Heart left ventricle (tissue), 16 donors: ENCODE measurements at regions of chr3 and their contacts with region 1.

Region 1: DNA sequence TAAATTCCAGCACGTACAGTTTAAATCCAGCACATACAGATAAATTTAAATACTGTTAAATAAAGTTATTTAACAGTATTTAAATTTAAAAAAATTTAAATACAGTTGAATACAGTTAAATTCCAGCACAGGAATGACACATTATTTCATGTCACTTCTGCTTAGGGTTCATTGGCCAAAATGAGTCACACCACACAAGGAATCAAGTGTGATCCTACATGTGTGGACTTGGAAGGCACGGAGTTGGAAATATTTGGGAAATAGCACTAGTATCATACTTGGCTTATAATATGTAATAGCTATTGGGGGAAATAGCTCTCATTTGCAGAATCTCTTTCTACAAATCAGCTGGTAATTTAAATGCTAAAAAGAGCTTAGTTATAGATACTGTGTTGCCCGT is 10.6 kb downstream of the RAB7A start:
- DNase-seq: no peak
- ATAC-seq: peak in 1 of 4 donors; percentile 27
- H3K4me3 ChIP-seq: no peak overlapping the region
- H3K27ac ChIP-seq: no peak overlapping the region
- H3K4me1 ChIP-seq: peaks cover 5 to 75% (median 50%) of the 10 kb centered on the region in 12 donors
- H3K27me3 ChIP-seq: no peaks in the 10 kb centered on the region
- CTCF ChIP-seq: no peak
- POLR2A ChIP-seq: no peak

Region 2: DNA sequence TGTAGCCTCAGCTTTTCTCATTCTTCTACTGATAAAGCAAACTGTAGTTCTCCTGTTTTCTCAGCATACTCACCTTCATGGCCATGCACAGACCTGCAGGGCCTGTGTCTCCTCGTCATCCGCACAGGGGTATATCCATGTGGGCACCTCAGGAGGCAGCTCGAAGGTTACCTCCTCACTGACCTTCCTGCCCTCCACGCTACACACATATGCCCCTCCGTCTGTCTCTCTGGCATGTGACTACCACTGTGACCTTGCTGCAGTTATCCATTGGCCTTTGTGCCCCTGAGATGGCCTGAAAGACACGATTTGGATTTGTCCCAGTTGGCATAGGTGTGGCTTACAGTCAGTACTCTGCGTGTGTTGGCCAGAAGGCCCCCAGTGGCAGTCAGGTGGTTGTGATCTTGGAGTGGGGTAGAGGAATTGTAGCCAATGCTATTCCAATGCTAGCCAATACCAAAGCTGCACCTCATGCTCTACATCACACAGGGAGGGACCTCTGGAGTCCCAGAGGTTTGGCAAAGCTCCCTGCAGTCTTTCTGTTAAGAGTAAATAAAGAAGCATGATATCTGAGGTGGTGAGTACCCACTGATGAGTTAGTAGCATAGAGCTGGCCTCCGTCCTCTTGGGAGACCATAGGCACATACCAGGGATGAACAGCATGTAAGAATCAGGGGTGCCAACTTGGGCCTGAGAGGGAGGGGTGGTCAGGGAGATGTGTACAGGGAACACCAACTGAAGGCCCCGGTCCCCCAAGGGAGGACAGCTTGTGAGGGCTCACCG is 439.9 kb before region 1 on chr3:
- intact Hi-C with region 1: no loop called
- DNase-seq: peak in 4 of 5 donors; percentile 64 to 84 (median 70)
- ATAC-seq: peak; percentile 87 to 94 (median 91)
- H3K4me3 ChIP-seq: no peak overlapping the region
- H3K27ac ChIP-seq: peak overlapping the region; percentile 24 to 84 (median 67)
- H3K4me1 ChIP-seq: peaks cover 0 to 56% (median 23%) of the 10 kb centered on the region in 12 donors
- H3K27me3 ChIP-seq: no peaks in the 10 kb centered on the region
- CTCF ChIP-seq: no peak
- POLR2A ChIP-seq: no peak

Region 3: DNA sequence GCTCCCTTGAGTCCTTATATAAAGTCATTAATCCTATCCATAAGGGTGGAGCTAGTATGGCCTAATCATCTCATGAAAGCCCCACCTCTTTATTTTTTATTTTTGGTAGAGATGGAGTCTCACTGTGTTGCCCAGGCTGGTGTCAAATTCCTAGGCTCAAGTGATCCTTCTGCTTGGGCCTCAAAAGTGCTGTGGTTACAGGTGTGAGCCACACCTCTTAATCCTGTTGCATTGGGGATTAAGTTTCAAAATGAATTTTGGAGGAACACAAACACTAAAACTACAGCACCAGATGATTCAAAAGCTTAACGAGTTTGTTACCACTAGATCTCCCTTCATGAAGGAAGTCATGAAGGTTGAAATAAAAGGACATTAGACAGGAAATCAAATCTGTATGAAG is 17.1 kb after region 1 on chr3:
- intact Hi-C with region 1: no loop called
- DNase-seq: no peak
- ATAC-seq: no peak
- H3K4me3 ChIP-seq: no peak overlapping the region
- H3K27ac ChIP-seq: no peak overlapping the region
- H3K4me1 ChIP-seq: peaks cover 0 to 66% (median 28%) of the 10 kb centered on the region in 12 donors
- H3K27me3 ChIP-seq: no peaks in the 10 kb centered on the region
- CTCF ChIP-seq: no peak
- POLR2A ChIP-seq: no peak

Region 4: GRCh38 chr3:128767094-128767750 is 30.6 kb after region 1 on chr3:
- intact Hi-C with region 1: loop called in 2 of 10 experiments (anchors 5 kb)
- DNase-seq: no peak
- ATAC-seq: no peak
- H3K4me3 ChIP-seq: no peak overlapping the region
- H3K27ac ChIP-seq: peak overlapping the region in 1 of 12 donors; percentile 35
- H3K4me1 ChIP-seq: peaks cover 0 to 83% (median 56%) of the 10 kb centered on the region in 12 donors
- H3K27me3 ChIP-seq: no peaks in the 10 kb centered on the region
- CTCF ChIP-seq: no peak
- POLR2A ChIP-seq: no peak

Region 5: GRCh38 chr3:128787256-128788240 is 50.9 kb after region 1 on chr3:
- intact Hi-C with region 1: loop called in 3 of 10 experiments (anchors 1 to 10 kb)
- DNase-seq: no peak
- ATAC-seq: no peak
- H3K4me3 ChIP-seq: no peak overlapping the region
- H3K27ac ChIP-seq: peak overlapping the region in 6 of 12 donors; percentile 1 to 80 (median 52)
- H3K4me1 ChIP-seq: peaks cover 4 to 97% (median 75%) of the 10 kb centered on the region in 12 donors
- H3K27me3 ChIP-seq: no peaks in the 10 kb centered on the region
- CTCF ChIP-seq: peak in 6 of 12 donors; percentile 7 to 27 (median 14)
- POLR2A ChIP-seq: no peak

Region 6: DNA sequence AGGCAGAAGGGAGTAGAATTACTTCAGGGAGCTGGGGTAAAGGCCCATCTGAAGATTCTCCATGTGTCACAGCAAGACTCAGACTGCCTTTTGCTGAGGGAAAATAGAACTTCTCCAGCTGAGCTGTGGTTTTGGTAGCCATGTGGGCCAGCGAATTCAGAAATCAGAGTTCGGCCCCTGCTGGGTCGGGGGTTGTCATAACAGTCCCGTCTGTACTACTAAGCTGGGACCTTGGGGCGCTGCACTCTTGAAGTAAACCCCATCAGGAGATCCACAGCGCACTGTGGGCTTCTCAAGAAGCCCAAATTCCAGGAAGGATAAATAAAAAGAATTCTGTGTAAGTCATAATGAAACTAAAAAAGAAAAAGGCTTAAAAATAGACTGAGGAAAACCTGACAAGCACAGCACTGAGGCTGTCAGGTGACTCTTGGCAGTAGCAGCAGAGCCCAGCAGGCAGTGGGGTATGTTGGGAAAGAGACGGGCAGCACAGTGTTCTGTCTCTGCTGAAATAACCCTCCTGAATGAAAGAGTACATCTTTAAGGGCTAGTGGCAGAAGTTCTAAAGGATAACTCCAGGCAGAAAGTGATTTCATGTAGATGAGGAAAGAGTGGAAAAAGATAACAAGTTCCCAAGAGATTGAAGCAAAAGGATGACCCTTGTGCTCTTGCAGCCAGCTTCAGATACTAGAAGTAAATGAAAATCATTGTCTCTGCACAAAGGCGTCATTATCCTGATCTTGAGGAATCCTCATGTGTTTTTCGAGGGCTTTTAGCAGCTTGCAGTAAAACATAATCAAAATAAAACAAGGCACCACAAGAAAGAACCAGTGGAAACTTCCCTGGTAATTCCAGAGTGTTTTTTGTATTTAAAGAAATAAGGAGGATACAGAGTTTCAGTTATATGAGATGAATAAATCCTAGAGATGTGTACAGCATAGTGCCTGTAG is 63.9 kb after region 1 on chr3:
- intact Hi-C with region 1: no loop called
- DNase-seq: peak in 4 of 5 donors; percentile 39 to 77 (median 64)
- ATAC-seq: peak; percentile 84 to 88 (median 87)
- H3K4me3 ChIP-seq: peak overlapping the region in 1 of 12 donors; percentile 8
- H3K27ac ChIP-seq: peak overlapping the region; percentile 69 to 93 (median 86)
- H3K4me1 ChIP-seq: peaks cover 0 to 74% (median 47%) of the 10 kb centered on the region in 12 donors
- H3K27me3 ChIP-seq: no peaks in the 10 kb centered on the region
- CTCF ChIP-seq: no peak
- POLR2A ChIP-seq: no peak